ENCODE measurements at regions of chr6 and their contacts with region 1.

Region 1: DNA sequence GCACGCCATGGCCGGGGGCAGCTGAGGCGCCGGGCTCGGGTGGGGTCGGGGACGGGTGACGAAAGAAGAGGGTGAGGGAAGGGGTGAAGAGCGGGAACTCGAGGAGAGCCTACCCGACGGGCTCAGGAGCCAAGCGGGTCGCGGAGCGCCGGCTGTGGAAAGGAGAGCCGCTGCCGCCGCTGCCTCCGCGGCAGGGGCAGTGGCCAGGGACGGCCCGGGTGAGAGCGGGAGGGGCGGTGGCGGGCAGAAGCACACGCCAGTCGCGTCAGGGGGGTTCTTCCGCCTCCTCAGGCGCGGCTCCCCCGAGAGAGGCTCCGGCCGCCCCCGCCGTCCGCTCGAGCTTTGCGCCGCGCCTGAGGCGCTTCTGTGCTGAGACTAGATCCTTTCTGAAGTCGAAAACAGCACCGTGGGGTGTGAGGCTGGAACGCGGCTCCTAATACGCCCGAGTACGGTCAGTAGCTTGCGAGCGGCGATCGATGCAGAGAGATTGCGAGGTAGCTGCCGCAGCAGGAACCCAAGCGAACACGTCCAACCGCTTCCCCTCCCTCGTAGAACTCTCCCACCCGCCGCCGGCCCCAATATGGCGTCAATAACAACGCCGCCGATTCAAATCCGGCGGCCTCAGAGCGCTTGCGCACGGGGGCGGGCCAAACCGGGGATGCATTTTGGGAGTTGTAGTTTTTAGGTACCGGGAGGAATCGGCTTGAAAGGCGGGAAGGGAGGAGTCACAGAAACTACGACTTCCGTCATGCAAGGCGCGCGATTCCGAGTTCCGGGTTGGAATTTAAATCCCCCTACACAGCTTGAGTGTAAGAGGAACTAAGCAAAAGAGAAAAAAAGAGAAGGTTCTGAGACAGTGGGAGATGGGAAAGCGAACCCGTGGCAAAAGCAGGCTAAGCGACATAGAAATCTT is at the start of gene AKIRIN2:
- DNase-seq: peak; percentile 96 to 99 (median 98)
- ATAC-seq: peak; percentile 90
- H3K4me3 ChIP-seq: peak within 1 kb of the TSS; percentile 80
- H3K4me3 Mint-ChIP-seq: peak within 1 kb of the TSS; percentile 92 to 98 (median 96)
- H3K27ac ChIP-seq: peak within 1 kb of the TSS; percentile 93
- H3K27ac Mint-ChIP-seq: peak within 1 kb of the TSS; percentile 89 to 97 (median 94)
- H3K4me1 ChIP-seq: peaks cover 6 to 13% of the 10 kb centered on the region in 2 donors
- H3K4me1 Mint-ChIP-seq: peaks cover 22 to 43% (median 40%) of the 10 kb centered on the region in 7 donors
- H3K27me3 ChIP-seq: no peaks in the 10 kb centered on the region
- H3K27me3 Mint-ChIP-seq: no peaks in the 10 kb centered on the region
- total RNA-seq, gene AKIRIN2: 36.0 to 197 (median 57.4) TPM

Region 2: GRCh38 chr6:87016772-87017171 is 685.2 kb before region 1 on chr6:
- CTCF ChIA-PET with region 1: no interaction called
- POLR2A ChIA-PET with region 1: no interaction called
- intact Hi-C with region 1: no loop called
- DNase-seq: no peak
- ATAC-seq: no peak
- H3K4me3 ChIP-seq: no peak overlapping the region
- H3K4me3 Mint-ChIP-seq: no peak overlapping the region
- H3K27ac ChIP-seq: no peak overlapping the region
- H3K27ac Mint-ChIP-seq: no peak overlapping the region
- H3K4me1 ChIP-seq: no peaks in the 10 kb centered on the region
- H3K4me1 Mint-ChIP-seq: no peaks in the 10 kb centered on the region
- H3K27me3 ChIP-seq: peaks cover 0 to 2% of the 10 kb centered on the region in 2 donors
- H3K27me3 Mint-ChIP-seq: peaks cover 0 to 28% (median 18%) of the 10 kb centered on the region in 5 donors

Region 3: GRCh38 chr6:87154993-87155841 is 546.7 kb before region 1 on chr6 and contains the start of gene ZNF292:
- CTCF ChIA-PET with region 1: no interaction called
- POLR2A ChIA-PET with region 1: interaction called, 8 read pairs
- intact Hi-C with region 1: loop called (anchors 1 kb)
- DNase-seq: peak; percentile 82 to 97 (median 94)
- ATAC-seq: peak; percentile 85
- H3K4me3 ChIP-seq: peak within 1 kb of the TSS; percentile 93
- H3K4me3 Mint-ChIP-seq: peak within 1 kb of the TSS; percentile 81 to 99 (median 94)
- H3K27ac ChIP-seq: peak within 1 kb of the TSS; percentile 83
- H3K27ac Mint-ChIP-seq: peak within 1 kb of the TSS; percentile 88 to 99 (median 94)
- H3K4me1 ChIP-seq: peaks cover 40 to 45% of the 10 kb centered on the region in 2 donors
- H3K4me1 Mint-ChIP-seq: peaks cover 34 to 69% (median 55%) of the 10 kb centered on the region in 7 donors
- H3K27me3 ChIP-seq: no peaks in the 10 kb centered on the region
- H3K27me3 Mint-ChIP-seq: peaks cover 0 to 2% (median 0%) of the 10 kb centered on the region in 5 donors
- total RNA-seq, gene ZNF292: 62.4 to 87.5 (median 74.3) TPM

Region 4: GRCh38 chr6:87472525-87473418 is 229.2 kb before region 1 on chr6 and contains the start of gene SLC35A1:
- CTCF ChIA-PET with region 1: no interaction called
- POLR2A ChIA-PET with region 1: interaction called, 3 read pairs
- intact Hi-C with region 1: loop called (anchors 1 kb)
- DNase-seq: peak; percentile 78 to 92 (median 87)
- ATAC-seq: peak; percentile 97
- H3K4me3 ChIP-seq: peak within 1 kb of the TSS; percentile 81
- H3K4me3 Mint-ChIP-seq: peak within 1 kb of the TSS; percentile 88 to 99 (median 98)
- H3K27ac ChIP-seq: peak within 1 kb of the TSS; percentile 93
- H3K27ac Mint-ChIP-seq: peak within 1 kb of the TSS; percentile 95 to 100 (median 99)
- H3K4me1 ChIP-seq: peaks cover 9 to 11% of the 10 kb centered on the region in 2 donors
- H3K4me1 Mint-ChIP-seq: peaks cover 14 to 31% (median 20%) of the 10 kb centered on the region in 7 donors
- H3K27me3 ChIP-seq: no peaks in the 10 kb centered on the region
- H3K27me3 Mint-ChIP-seq: peaks cover 2 to 14% (median 9%) of the 10 kb centered on the region in 5 donors
- total RNA-seq, gene SLC35A1: 10.4 to 23.4 (median 15.6) TPM

Region 5: GRCh38 chr6:87671555-87672029 is 30.3 kb before region 1 on chr6:
- CTCF ChIA-PET with region 1: no interaction called
- POLR2A ChIA-PET with region 1: no interaction called
- intact Hi-C with region 1: loop called in 1 of 2 experiments (anchors 1 kb)
- DNase-seq: no peak
- ATAC-seq: no peak
- H3K4me3 ChIP-seq: no peak overlapping the region
- H3K4me3 Mint-ChIP-seq: no peak overlapping the region
- H3K27ac ChIP-seq: no peak overlapping the region
- H3K27ac Mint-ChIP-seq: peak overlapping the region in 7 of 9 donors; percentile 42 to 85 (median 59)
- H3K4me1 ChIP-seq: no peaks in the 10 kb centered on the region
- H3K4me1 Mint-ChIP-seq: peaks cover 12 to 23% (median 16%) of the 10 kb centered on the region in 7 donors
- H3K27me3 ChIP-seq: no peaks in the 10 kb centered on the region
- H3K27me3 Mint-ChIP-seq: no peaks in the 10 kb centered on the region

Region 6: GRCh38 chr6:87832025-87832825 is 130.3 kb after region 1 on chr6:
- CTCF ChIA-PET with region 1: no interaction called
- POLR2A ChIA-PET with region 1: no interaction called
- intact Hi-C with region 1: loop called in 1 of 2 experiments (anchors 1 kb)
- DNase-seq: peak in 6 of 9 donors; percentile 12 to 50 (median 29)
- ATAC-seq: peak; percentile 81
- H3K4me3 ChIP-seq: peak overlapping the region; percentile 64
- H3K4me3 Mint-ChIP-seq: peak overlapping the region; percentile 69 to 97 (median 89)
- H3K27ac ChIP-seq: peak overlapping the region; percentile 56
- H3K27ac Mint-ChIP-seq: peak overlapping the region; percentile 75 to 95 (median 88)
- H3K4me1 ChIP-seq: no peaks in the 10 kb centered on the region
- H3K4me1 Mint-ChIP-seq: peaks cover 0 to 15% (median 8%) of the 10 kb centered on the region in 7 donors
- H3K27me3 ChIP-seq: no peaks in the 10 kb centered on the region
- H3K27me3 Mint-ChIP-seq: peaks cover 0 to 12% (median 4%) of the 10 kb centered on the region in 5 donors

Region 7: GRCh38 chr6:88881451-88881850 is 1179.5 kb after region 1 on chr6:
- CTCF ChIA-PET with region 1: no interaction called
- POLR2A ChIA-PET with region 1: no interaction called
- intact Hi-C with region 1: no loop called
- DNase-seq: no peak
- ATAC-seq: no peak
- H3K4me3 ChIP-seq: no peak overlapping the region
- H3K4me3 Mint-ChIP-seq: no peak overlapping the region
- H3K27ac ChIP-seq: no peak overlapping the region
- H3K27ac Mint-ChIP-seq: peak overlapping the region in 1 of 9 donors; percentile 0
- H3K4me1 ChIP-seq: no peaks in the 10 kb centered on the region
- H3K4me1 Mint-ChIP-seq: peaks cover 0 to 15% (median 2%) of the 10 kb centered on the region in 7 donors
- H3K27me3 ChIP-seq: no peaks in the 10 kb centered on the region
- H3K27me3 Mint-ChIP-seq: no peaks in the 10 kb centered on the region

Region 8: DNA sequence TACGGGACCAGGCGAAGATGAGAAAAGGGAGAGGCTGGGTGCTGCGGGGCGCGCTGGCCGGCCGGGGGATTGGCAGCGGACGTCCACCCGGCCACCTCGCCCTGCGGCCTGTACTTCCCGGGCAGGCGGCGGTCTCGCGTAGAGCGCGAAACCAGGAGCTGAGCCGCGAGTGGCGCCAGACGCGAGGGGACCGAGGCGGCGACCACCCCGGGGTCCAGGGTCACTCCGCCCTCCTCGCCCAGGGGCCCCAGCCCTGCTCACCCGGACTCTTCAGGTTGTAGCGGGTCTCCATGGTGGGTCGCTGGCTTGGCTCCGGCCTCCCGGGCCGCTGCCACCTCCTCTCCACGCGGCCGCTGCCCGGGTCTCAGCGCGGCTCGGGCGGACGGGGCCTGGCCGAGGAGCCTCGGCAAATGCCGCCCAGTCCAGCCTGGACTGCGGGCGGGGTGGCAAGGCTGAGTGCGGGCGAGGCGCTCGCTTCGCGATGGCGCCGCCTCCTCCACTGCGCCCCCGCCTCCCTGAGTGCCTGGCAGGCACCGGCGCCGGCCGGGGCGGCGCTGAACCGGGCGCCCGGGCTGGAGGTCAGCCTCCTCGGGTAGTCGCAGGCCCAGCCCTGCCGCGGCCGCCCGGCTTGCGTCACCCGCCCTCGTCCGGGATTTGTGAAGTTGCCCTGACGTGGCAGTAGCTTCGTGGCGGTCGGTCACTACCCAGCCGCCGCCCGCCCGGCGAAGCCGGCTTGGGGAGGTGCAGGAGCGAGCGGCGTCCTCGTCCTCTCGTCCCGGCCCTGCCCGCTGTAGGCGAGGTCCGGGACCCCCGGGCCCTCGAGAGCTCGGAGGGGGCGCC is 1650.6 kb after region 1 on chr6 and contains the start of gene UBE2J1:
- CTCF ChIA-PET with region 1: no interaction called
- POLR2A ChIA-PET with region 1: no interaction called
- intact Hi-C with region 1: loop called (anchors 2 to 5 kb)
- DNase-seq: peak; percentile 34 to 87 (median 61)
- ATAC-seq: peak; percentile 89
- H3K4me3 ChIP-seq: peak within 1 kb of the TSS; percentile 67
- H3K4me3 Mint-ChIP-seq: peak within 1 kb of the TSS; percentile 96 to 100 (median 98)
- H3K27ac ChIP-seq: peak within 1 kb of the TSS; percentile 88
- H3K27ac Mint-ChIP-seq: peak within 1 kb of the TSS; percentile 95 to 98 (median 97)
- H3K4me1 ChIP-seq: peaks cover 27 to 30% of the 10 kb centered on the region in 2 donors
- H3K4me1 Mint-ChIP-seq: peaks cover 44 to 81% (median 72%) of the 10 kb centered on the region in 7 donors
- H3K27me3 ChIP-seq: no peaks in the 10 kb centered on the region
- H3K27me3 Mint-ChIP-seq: no peaks in the 10 kb centered on the region
- total RNA-seq, gene UBE2J1: 18.8 to 47.7 (median 27.7) TPM

Measured in naive thymus-derived CD4-positive, alpha-beta T cell (primary cell).